ENCODE measurements at regions of chr2 and their contacts with region 1.

Region 1: GRCh38 chr2:74440378-74441169 is 1.2 kb downstream of the RTKN start:
- DNase-seq: peak in 1 of 2 donors; percentile 89
- H3K4me3 ChIP-seq: peak overlapping the region; percentile 68
- H3K27ac ChIP-seq: peak overlapping the region; percentile 77 to 86
- H3K4me1 ChIP-seq: peaks cover 12 to 30% of the 10 kb centered on the region in 2 donors
- H3K27me3 ChIP-seq: no peaks in the 10 kb centered on the region
- CTCF ChIP-seq: peak; percentile 32 to 48 (median 38)

Region 2: DNA sequence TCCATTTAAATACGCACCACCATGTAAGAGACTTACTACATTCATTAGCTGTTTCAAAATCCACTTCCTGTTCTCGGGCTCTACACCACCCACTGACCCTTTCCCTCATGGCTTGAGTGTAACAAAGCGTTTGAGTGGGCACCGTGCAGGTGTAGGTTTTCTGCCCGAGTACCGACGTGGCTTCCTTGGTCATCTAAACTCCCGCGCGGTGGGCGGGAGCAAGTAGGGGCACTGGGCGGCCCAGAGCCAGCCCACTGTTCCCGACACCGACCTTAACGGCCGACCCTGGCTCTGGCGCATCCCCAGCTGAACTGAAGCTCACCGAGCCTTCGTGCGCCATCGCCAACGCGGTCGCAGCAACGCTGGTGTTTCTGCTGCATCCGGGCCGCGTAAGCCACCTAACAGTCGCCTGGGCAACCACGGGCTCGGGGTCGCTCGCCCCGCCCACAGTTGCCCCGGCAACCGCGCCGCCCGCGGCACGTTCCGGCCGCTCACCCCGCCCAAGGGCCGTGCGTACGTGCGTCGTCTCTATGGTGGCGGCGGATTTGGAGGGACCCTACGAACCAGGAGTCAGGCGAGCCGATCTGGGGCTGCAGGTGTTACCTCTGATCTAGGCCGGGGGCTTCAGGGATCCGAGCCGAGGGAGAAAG is 19.2 kb before region 1 on chr2 and contains the starts of genes C2orf81 and WDR54:
- intact Hi-C with region 1: loop called (anchors 1 kb)
- DNase-seq: peak; percentile 53 to 93
- H3K4me3 ChIP-seq: peak within 1 kb of the TSS; percentile 64 to 85
- H3K27ac ChIP-seq: peak within 1 kb of the TSS; percentile 32 to 63
- H3K4me1 ChIP-seq: peaks cover 3 to 5% of the 10 kb centered on the region in 2 donors
- H3K27me3 ChIP-seq: no peaks in the 10 kb centered on the region
- CTCF ChIP-seq: no peak
- total RNA-seq, gene C2orf81: 10.3 TPM
- total RNA-seq, gene WDR54: 5.5 TPM

Region 3: DNA sequence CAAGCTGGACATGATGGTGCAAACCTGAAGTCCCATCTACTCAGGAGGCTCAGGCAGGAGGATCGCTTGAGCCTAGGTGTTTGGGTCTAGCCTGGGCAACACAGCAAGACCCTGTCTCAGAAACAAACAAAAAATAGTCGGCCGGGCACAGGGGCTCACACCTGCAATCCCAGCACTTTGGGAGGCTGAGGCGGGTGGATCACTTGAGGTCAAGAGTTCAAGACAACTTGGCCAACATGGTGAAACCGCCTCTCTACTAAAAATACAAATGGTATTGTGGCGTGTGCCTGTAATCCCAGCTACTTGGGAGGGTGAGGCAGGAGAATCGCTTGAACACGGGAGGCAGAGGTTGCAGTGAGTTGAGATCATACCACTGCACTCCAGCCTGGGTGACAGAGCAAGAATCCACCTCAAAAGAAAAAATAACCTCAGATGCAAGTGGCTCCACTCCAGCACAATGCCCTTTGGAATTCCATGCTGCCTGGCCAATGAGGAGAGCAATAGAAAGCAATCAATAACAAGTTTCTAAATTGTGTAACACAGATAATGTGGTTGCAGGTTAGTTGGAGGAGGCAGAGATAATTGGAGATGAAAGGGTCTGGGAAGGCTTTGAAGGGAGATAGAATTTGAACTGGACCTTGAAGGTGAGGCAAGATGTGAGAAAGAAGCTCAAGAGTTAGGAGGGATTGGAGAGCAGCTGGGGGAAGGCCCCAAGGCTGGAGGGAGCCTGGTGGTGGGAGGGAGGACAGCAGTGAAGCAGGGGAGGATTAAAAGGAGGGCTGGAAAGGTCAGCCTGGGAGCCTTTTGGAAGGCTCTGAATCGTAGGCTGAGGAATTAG is 48.3 kb after region 1 on chr2:
- intact Hi-C with region 1: no loop called
- DNase-seq: no peak
- H3K4me3 ChIP-seq: no peak overlapping the region
- H3K27ac ChIP-seq: no peak overlapping the region
- H3K4me1 ChIP-seq: peaks cover 0 to 2% of the 10 kb centered on the region in 2 donors
- H3K27me3 ChIP-seq: no peaks in the 10 kb centered on the region
- CTCF ChIP-seq: no peak

Measured in ascending aorta (tissue), 2 donors.